Thyroid gland (tissue), 4 donors: ENCODE measurements at regions of chr11 and their contacts with region 1.

Region 1: GRCh38 chr11:2885676-2886081 is at the start of gene CDKN1C:
- DNase-seq: peak; percentile 88 to 89
- H3K4me3 ChIP-seq: peak within 1 kb of the TSS; percentile 35 to 75 (median 64)
- H3K27ac ChIP-seq: peak within 1 kb of the TSS; percentile 62 to 83 (median 77)
- H3K4me1 ChIP-seq: peaks cover 16 to 21% of the 10 kb centered on the region in 2 donors
- H3K27me3 ChIP-seq: no peaks in the 10 kb centered on the region
- CTCF ChIP-seq: peak in 1 of 6 experiments; percentile 15
- POLR2A ChIP-seq: peak; percentile 86 to 96
- total RNA-seq, gene CDKN1C: 12.6 to 29.7 (median 16.8) TPM

Region 2: GRCh38 chr11:2549876-2550620 is 335.6 kb before region 1 on chr11:
- intact Hi-C with region 1: no loop called
- DNase-seq: peak; percentile 81
- H3K4me3 ChIP-seq: no peak overlapping the region
- H3K27ac ChIP-seq: no peak overlapping the region
- H3K4me1 ChIP-seq: peaks cover 13 to 23% of the 10 kb centered on the region in 2 donors
- H3K27me3 ChIP-seq: no peaks in the 10 kb centered on the region
- CTCF ChIP-seq: no peak
- POLR2A ChIP-seq: no peak

Region 3: DNA sequence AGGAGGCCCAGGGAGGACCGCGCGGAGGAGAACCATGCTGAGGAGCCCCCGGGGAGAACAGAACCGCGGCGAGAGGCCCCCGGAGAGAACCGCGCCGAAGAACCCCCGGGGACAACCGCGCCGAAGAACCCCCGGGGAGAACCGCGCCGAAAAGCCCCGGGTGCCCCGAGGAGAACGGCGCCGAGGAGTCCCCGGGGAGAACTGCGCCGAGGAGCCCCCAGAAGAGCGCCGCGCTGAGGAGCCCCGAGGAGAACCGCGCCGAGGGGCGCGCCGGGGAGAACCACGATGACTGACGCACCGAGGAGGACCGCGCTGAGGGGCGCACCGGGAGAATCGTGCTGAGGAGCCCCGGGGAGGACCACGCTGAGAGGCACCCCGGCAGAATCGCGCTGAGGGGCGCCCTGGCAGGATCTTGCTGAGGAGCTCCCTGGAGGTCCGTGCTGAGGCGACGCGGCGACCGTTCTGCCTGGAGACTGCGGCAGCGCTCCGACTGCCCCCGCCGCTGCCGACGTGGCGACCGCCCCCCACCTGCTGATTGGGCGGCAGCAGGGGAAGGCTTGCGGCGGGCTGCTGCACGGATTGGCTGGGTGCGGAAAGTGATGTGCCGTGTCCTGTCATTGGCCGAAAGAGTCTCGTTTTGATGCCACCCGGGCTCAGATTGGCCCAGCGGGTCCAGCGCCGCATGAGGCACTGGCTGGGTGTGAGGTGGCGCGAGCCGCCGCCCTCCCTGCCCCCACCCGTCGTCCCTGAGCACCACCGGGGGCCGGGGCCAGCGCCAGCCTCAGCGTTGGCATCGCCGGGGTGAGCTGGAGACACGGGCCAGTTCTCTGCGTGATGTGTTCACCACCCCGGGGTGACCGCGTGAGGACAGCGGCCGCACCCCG is 185.9 kb before region 1 on chr11 and contains the start of gene KCNQ1OT1:
- intact Hi-C with region 1: loop called (anchors 10 kb)
- DNase-seq: peak; percentile 91 to 93
- H3K4me3 ChIP-seq: peak within 1 kb of the TSS; percentile 5 to 67 (median 54)
- H3K27ac ChIP-seq: peak within 1 kb of the TSS; percentile 87 to 91 (median 89)
- H3K4me1 ChIP-seq: peaks cover 23 to 30% of the 10 kb centered on the region in 2 donors
- H3K27me3 ChIP-seq: no peaks in the 10 kb centered on the region
- CTCF ChIP-seq: no peak
- POLR2A ChIP-seq: peak; percentile 90 to 98
- total RNA-seq, gene KCNQ1OT1: 2.0 to 4.1 (median 3.2) TPM

Region 4: GRCh38 chr11:3091791-3092602 is 206.3 kb after region 1 on chr11:
- intact Hi-C with region 1: no loop called
- DNase-seq: peak; percentile 71 to 72
- H3K4me3 ChIP-seq: no peak overlapping the region
- H3K27ac ChIP-seq: no peak overlapping the region
- H3K4me1 ChIP-seq: peaks cover 0 to 13% of the 10 kb centered on the region in 2 donors
- H3K27me3 ChIP-seq: no peaks in the 10 kb centered on the region
- CTCF ChIP-seq: peak; percentile 96 to 100 (median 99)
- POLR2A ChIP-seq: no peak